ENCODE measurements at regions of chr14 and their contacts with region 1.

Region 1: GRCh38 chr14:69090187-69090789 is 62.6 kb downstream of the DCAF5 start:
- DNase-seq: peak; percentile 47 to 68
- H3K4me3 ChIP-seq: no peak overlapping the region
- H3K27ac ChIP-seq: no peak overlapping the region
- H3K4me1 ChIP-seq: peaks cover 20% of the 10 kb centered on the region
- H3K27me3 ChIP-seq: no peaks in the 10 kb centered on the region
- CTCF ChIP-seq: peak; percentile 95

Region 2: DNA sequence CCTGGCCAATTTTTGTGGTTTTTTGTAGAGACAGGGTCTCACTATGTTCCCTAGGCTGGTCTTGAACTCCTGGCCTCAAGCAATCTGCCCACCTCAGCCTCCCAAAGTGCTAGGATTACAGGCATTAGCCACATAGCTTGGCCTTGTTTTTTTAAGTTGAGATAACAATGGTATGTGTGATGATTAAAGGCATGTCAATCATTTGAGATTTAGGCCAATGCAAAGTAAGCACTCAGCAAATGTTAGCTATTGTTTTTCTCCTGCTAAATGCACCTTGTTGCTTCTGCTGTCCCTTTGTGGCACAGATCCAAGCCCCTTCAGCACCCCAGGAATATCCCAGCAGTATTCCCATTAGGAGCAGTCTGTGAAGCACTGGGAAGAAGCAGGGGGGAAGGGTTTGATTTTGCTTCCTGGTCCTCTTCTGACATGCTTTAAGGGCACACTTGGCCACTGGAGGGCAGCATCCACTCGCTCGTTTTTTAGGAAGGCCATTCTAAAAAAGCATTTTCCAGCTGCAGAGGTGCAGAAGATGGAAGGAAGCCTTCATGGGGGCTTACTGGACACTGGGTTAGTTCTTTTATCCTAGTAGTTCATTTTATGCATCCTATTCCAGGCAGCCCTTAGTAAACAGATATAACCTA is 227.2 kb before region 1 on chr14:
- CTCF ChIA-PET with region 1: no interaction called
- POLR2A ChIA-PET with region 1: no interaction called
- intact Hi-C with region 1: loop called (anchors 5 kb)
- DNase-seq: peak; percentile 66 to 81
- H3K4me3 ChIP-seq: no peak overlapping the region
- H3K27ac ChIP-seq: no peak overlapping the region
- H3K4me1 ChIP-seq: peaks cover 5% of the 10 kb centered on the region; the same call in 1 of the 2 replicates
- H3K27me3 ChIP-seq: no peaks in the 10 kb centered on the region
- CTCF ChIP-seq: peak; percentile 86

Region 3: GRCh38 chr14:68911594-68912227 is 178.6 kb before region 1 on chr14:
- CTCF ChIA-PET with region 1: interaction called, 3 read pairs
- POLR2A ChIA-PET with region 1: no interaction called
- intact Hi-C with region 1: loop called (anchors 1 kb)
- DNase-seq: peak; percentile 69 to 73
- H3K4me3 ChIP-seq: no peak overlapping the region
- H3K27ac ChIP-seq: no peak overlapping the region
- H3K4me1 ChIP-seq: no peaks in the 10 kb centered on the region
- H3K27me3 ChIP-seq: no peaks in the 10 kb centered on the region
- CTCF ChIP-seq: peak; percentile 98

Region 4: DNA sequence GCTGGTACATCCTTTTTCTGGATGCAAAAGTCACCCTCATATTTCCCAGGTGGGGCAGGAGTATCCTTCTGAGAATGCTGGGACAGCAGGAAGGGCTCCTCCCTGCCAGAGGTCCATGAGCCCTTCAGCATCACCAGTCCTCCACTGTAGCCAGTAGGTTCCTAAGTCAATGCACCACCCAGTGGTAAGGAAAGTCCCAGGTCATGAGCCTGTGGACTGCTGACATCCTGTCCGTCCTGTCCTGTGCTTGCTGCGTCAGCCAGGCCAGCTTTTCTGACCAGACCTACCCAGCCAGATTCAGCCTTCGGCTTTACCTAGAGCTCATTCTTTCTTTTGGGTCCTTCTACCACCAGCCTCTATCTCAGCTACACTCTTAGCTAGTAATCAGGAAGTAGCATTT is 88.2 kb before region 1 on chr14:
- CTCF ChIA-PET with region 1: no interaction called
- POLR2A ChIA-PET with region 1: interaction called, 4 read pairs
- intact Hi-C with region 1: loop called (anchors 5 kb)
- DNase-seq: peak; percentile 51 to 66
- H3K4me3 ChIP-seq: no peak overlapping the region
- H3K27ac ChIP-seq: no peak overlapping the region
- H3K4me1 ChIP-seq: peaks cover 20% of the 10 kb centered on the region
- H3K27me3 ChIP-seq: no peaks in the 10 kb centered on the region
- CTCF ChIP-seq: peak; percentile 33; the same call in 1 of the 2 replicates

Region 5: DNA sequence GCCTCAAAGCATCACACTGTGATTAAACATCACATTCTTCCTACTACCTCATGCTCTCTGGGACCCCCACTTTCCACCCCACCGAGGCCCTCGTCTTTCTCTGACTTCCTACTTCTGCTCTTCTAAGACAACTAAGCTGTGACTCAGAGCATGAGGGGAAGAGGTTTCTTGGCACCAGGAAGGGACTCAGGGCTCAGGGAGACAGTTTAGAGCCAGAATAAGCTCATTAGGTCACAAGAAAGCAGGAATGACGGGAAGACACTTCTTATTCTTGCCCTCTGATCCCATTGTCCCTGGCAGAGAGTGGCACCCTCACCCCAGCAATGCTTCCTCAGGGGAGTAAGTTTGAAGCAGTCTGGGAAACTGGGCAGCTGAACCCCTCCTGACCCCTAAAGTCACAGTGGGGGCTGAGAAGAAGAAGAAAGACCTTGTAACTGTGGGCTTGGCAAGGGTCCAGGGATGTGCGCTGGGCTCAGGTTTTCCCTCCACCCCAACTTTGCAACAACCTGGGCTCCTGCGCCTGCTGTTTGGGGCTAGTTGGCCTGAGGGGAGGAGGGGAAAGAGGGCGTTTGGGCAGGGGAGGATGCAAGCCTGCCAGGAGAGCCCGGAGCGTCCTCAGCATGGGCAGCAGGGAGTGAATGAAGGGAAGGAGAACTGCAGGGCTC is 46.6 kb before region 1 on chr14:
- CTCF ChIA-PET with region 1: interaction called, 3 read pairs
- POLR2A ChIA-PET with region 1: no interaction called
- intact Hi-C with region 1: loop called (anchors 5 kb)
- DNase-seq: peak; percentile 26 to 42
- H3K4me3 ChIP-seq: no peak overlapping the region
- H3K27ac ChIP-seq: no peak overlapping the region
- H3K4me1 ChIP-seq: peaks cover 37% of the 10 kb centered on the region
- H3K27me3 ChIP-seq: no peaks in the 10 kb centered on the region
- CTCF ChIP-seq: no peak

Region 6: DNA sequence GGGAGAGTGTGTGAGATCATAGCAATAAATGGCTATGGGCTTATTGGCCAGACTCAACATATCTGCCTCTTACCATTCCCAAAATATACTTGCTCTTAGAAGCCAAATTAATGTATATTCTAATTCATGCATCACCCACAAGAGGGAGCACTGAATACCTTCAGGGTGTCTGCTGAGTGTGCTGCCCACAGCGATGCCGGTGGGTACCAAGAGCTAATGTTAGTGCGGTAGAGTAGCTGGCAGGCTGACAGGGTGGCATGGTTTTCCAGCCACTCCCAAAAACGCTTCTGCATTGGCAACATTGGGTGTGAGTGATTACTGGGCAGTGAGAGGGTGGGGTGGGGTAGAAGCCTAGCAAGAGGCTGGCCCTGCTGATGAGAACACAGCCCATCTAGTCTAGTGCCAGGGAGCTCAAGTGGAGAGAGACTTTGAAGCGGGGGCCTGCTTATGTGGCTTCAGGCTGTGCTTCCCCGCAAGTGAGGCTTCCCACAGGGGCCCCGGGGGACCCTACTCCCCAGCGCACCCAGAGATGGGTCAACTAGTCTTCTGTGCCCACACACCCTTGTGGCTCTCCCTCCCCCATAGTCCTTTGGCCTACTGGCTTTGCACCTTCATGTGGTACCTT is 385.0 kb after region 1 on chr14:
- CTCF ChIA-PET with region 1: no interaction called
- POLR2A ChIA-PET with region 1: no interaction called
- intact Hi-C with region 1: no loop called
- DNase-seq: no peak
- H3K4me3 ChIP-seq: no peak overlapping the region
- H3K27ac ChIP-seq: no peak overlapping the region
- H3K4me1 ChIP-seq: peaks cover 22% of the 10 kb centered on the region
- H3K27me3 ChIP-seq: no peaks in the 10 kb centered on the region
- CTCF ChIP-seq: peak; percentile 64

Measured in PC-9 (cell line).